Upper lobe of right lung (tissue), 1 donor: ENCODE measurements at regions of chr20 and their contacts with region 1.

Region 1: DNA sequence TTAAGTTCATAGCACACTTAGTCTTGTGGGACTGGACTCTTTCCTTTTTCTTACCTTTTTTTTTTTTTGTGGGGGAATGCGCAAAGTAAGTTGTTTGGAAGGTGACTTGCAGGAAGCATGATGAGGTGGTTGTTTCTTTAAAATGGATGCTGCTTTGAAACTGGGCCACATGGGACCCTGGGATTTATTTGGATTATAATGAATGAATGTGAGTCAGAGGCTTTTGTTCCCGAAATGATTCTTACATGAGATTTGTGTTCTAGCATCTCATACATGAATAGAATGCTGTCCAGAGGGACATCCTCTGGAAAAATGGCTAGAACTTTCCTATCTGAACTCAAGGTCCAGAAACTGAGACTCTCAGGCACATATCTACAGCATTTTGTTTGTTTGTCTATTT is 236.6 kb upstream of the RNF24 start:
- DNase-seq: no peak
- ATAC-seq: no peak
- H3K4me3 ChIP-seq: no peak overlapping the region
- H3K27ac ChIP-seq: no peak overlapping the region
- H3K4me1 ChIP-seq: peaks cover 8% of the 10 kb centered on the region
- H3K27me3 ChIP-seq: peaks cover 28% of the 10 kb centered on the region
- CTCF ChIP-seq: no peak

Region 2: DNA sequence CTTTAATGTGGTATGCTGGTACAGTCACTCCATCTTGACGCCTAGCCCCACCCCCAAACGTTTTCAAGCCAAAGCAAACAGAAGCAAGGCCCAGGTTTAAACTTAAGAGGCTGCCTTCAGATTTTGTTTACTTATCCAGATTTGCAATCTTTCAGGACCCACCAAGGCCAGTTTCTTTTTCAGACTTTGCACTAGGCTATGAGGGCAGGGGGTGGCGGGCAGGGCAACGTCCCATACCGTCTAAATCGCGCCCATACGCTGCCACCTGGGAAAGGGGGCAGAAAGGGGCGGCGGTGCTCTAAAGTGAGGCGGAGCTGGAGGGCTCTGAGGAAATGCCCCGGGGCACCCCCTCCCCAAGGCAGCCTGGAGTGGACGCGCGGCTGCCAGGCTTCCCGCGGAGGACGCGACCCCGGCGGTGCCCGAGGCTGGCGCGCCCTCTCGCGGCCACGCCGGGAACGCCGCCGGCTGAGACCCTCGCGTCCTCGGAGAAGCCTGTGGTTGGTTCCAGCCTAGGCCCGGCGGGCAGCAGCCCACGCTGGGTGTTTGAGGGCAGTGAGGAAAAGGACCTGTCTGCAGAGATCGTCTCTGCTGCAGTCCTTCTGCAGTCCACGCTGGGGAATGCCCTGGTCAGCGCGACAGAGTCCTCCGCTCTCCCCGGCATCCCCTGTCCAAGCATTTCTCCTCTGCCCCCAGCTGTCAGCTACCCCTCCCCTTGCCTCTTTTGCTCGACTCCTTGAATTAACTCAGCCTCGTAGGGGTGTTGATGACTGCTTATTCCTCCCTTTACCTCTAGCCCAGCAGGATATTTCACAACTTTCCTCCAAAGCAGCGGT is 340.5 kb after region 1 on chr20:
- intact Hi-C with region 1: loop called (anchors 5 kb)
- DNase-seq: peak; percentile 83
- ATAC-seq: peak; percentile 96
- H3K4me3 ChIP-seq: peak overlapping the region; percentile 51
- H3K27ac ChIP-seq: no peak overlapping the region
- H3K4me1 ChIP-seq: peaks cover 7% of the 10 kb centered on the region
- H3K27me3 ChIP-seq: no peaks in the 10 kb centered on the region
- CTCF ChIP-seq: peak; percentile 93